Lower leg skin (tissue), 4 donors: ENCODE measurements at regions of chr19 and their contacts with region 1.

Region 1: GRCh38 chr19:18415178-18415997 is 3.8 kb upstream of the SSBP4 start:
- DNase-seq: peak; percentile 53 to 95
- H3K4me3 ChIP-seq: no peak overlapping the region
- CTCF ChIP-seq: no peak
- POLR2A ChIP-seq: no peak

Region 2: GRCh38 chr19:18349524-18350128 is 65.8 kb before region 1 on chr19:
- intact Hi-C with region 1: loop called (anchors 5 kb)
- DNase-seq: peak in 1 of 2 donors; percentile 92
- H3K4me3 ChIP-seq: no peak overlapping the region
- CTCF ChIP-seq: no peak
- POLR2A ChIP-seq: no peak

Region 3: GRCh38 chr19:18379803-18380747 is 35.3 kb before region 1 on chr19:
- intact Hi-C with region 1: loop called (anchors 2 kb)
- DNase-seq: peak; percentile 91 to 98
- H3K4me3 ChIP-seq: no peak overlapping the region
- CTCF ChIP-seq: no peak
- POLR2A ChIP-seq: no peak